Panc1 (cell line): ENCODE measurements at regions of chr11 and their contacts with region 1.

Region 1: DNA sequence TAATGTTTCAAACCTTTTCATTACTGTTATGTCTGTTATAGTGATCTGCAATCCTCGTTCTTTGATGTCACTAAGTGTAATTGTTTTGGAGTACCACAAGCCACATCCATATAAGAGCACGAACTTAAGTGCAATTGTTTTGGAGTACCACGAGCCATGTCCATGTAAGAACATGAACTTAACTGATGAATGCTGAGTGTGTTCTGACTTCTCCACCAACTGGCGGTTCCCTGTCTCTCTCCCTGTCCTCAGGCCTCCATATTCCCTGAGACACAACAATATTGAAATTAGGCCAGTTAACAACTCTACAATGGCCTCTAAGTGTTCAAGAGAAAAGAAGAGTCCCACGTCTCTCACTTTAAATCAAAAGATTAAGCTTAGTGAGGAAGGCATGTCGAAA is 23.5 kb downstream of the TESMIN start:
- DNase-seq: no peak
- ATAC-seq: no peak
- H3K4me3 ChIP-seq: no peak overlapping the region
- H3K27ac ChIP-seq: no peak overlapping the region
- H3K4me1 ChIP-seq: no peaks in the 10 kb centered on the region
- H3K27me3 ChIP-seq: no peaks in the 10 kb centered on the region
- CTCF ChIP-seq: peak; percentile 49; the same call in 1 of the 2 replicates

Region 2: DNA sequence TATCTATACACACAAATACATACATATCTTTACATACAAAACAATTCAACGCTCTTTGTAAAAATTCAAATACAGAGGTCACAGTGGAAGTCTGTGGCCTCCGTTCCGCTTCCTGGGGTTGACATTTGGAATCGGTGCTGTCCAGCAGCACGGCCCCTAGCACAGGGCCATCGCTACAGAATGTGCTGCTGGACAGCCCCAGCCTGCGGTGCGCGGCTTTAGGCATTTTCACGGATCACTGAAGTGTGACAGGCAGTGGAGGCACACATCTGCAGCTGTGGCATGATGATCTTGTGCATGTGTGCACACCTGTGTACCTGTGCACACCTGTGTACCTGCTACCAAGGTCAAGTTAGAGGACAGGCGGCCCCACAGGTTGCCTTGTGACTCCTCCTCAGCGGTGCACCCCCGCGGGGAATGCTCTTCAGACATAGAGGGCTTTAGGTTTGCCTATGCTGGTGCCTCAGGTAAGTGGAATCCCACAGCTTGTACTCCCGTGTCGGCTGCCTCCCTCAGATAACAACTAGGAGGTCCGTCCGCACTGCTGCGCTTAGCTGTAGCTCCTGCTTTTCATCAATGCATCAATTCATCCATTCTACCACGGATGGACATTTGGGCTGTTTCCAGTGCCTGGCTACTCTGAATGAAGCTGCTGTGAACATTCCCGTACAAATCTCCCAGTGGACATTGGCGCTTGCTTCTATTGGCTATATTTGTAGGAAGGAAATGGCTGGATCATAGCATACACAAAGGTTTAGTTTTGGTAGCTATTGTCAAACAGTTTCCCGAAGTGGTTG is 13.5 kb before region 1 on chr11:
- CTCF ChIA-PET with region 1: no interaction called
- POLR2A ChIA-PET with region 1: interaction called, 20 read pairs
- in situ Hi-C with region 1: no loop called
- intact Hi-C with region 1: no loop called
- DNase-seq: no peak
- ATAC-seq: no peak
- H3K4me3 ChIP-seq: no peak overlapping the region
- H3K27ac ChIP-seq: no peak overlapping the region
- H3K4me1 ChIP-seq: no peaks in the 10 kb centered on the region
- H3K27me3 ChIP-seq: no peaks in the 10 kb centered on the region
- CTCF ChIP-seq: no peak

Region 3: DNA sequence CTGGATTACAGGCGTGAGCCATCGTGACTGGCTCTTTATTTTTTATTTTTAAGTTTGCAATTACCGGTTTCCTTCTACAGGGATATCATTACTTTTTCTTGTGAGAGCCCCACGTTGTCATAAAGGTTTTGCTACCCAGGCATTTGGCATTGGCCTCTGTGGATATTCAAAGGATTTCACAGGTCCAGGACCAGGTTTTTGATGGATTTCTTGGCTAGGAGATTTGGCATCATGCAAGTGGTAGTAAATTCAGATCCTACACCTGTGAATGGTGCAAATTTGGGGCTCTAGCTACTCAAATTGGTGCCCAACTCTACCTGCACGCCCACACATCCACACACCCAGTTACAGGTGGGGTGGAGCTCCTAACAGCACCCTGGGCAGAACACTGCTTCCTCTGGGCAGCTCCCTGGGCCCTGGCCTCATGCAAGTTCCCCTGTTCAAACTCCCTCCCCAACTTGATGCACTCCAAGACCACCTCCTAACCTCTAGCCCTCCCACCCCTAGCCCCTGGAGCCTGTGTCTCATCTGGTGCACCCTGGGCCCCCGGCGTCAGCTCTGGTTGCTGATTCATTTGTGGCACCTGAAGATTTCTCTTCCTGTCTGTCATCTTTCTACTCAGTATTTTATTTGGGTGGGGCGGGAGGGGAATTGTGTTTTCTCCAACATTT is 262.3 kb after region 1 on chr11:
- CTCF ChIA-PET with region 1: no interaction called
- POLR2A ChIA-PET with region 1: no interaction called
- in situ Hi-C with region 1: no loop called
- intact Hi-C with region 1: no loop called
- DNase-seq: no peak
- ATAC-seq: no peak
- H3K4me3 ChIP-seq: no peak overlapping the region
- H3K27ac ChIP-seq: no peak overlapping the region
- H3K4me1 ChIP-seq: peaks cover 7% of the 10 kb centered on the region; the same call in 1 of the 2 replicates
- H3K27me3 ChIP-seq: peaks cover 4% of the 10 kb centered on the region; the same call in 1 of the 2 replicates
- CTCF ChIP-seq: no peak